ENCODE measurements at regions of chr1 and their contacts with region 1.

Region 1: GRCh38 chr1:162035241-162035640 is 11.6 kb upstream of the OLFML2B start:
- DNase-seq: peak; percentile 60
- H3K4me3 ChIP-seq: no peak overlapping the region
- H3K27ac ChIP-seq: no peak overlapping the region
- H3K4me1 ChIP-seq: peaks cover 6% of the 10 kb centered on the region
- H3K27me3 ChIP-seq: peaks cover 0 to 13% of the 10 kb centered on the region in 2 experiments
- CTCF ChIP-seq: no peak
- POLR2A ChIP-seq: no peak

Region 2: DNA sequence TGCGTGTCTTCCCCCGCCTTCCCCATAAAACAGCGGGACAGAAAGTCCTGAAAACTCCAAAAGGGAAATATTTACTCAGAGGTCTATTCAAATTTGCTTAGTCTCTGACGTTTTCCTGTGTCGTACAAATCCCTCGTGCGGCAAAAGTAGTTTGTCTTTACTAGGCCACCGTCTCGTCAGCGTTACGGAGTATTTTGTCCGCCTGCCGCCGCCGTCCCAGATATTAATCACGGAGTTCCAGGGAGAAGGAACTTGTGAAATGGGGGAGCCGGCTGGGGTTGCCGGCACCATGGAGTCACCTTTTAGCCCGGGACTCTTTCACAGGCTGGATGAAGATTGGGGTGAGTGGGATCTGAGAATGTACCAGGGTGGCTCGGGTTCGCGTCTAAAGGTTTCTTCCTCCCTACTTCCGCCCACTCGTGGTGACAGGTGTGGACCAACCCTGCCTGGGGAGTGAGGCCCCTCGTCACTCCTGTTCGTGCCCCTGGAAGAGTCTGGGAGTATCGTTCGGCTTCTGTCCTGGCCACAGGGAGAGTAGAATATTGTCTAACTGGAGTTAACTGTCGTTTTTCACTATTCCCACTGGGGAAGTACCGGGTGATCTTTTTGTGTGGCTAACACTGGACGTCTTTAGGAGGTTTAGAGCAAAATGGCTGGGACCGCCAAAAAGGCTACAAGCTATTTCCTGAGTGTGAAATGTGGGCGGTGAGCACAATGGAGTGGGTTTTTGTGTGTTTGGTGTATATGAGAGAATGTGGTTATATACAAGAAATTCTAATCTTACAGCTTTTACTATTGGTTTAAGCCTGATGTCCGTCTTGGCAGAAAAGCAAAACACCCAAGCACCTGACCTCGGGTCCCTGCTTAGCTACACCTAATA is 268.9 kb before region 1 on chr1 and contains the start of gene ATF6:
- CTCF ChIA-PET with region 1: interaction called, 68 read pairs
- POLR2A ChIA-PET with region 1: interaction called, 3 read pairs
- dilution Hi-C with region 1: no loop called
- intact Hi-C with region 1: loop called (anchors 10 kb)
- DNase-seq: peak; percentile 97
- H3K4me3 ChIP-seq: peak within 1 kb of the TSS; percentile 64 to 92 (median 84)
- H3K27ac ChIP-seq: peak within 1 kb of the TSS; percentile 88
- H3K4me1 ChIP-seq: peaks cover 30% of the 10 kb centered on the region
- H3K27me3 ChIP-seq: no peaks in the 10 kb centered on the region
- CTCF ChIP-seq: no peak
- POLR2A ChIP-seq: peak; percentile 70
- total RNA-seq, gene ATF6: 38.8 and 40.3 TPM in 2 replicates

Region 3: DNA sequence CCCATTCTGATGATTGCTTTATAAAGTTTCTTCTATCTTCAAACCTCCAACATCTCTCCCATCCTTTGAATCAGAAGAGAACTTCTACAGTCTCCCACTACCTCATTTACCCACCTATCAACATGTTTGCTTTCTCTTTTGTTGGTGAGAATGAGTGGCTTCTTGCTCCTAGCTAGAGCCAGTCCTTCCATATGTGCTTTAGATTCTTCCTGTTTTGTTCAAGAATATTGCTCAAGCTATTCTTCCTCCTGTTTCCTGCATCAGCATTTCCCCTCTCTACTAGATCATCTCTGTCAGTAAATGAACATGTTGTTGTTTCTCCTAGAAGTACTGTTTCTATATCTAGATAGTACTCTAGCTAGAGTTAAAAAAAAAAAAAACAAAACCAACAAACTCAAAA is 262.8 kb before region 1 on chr1:
- CTCF ChIA-PET with region 1: interaction called, 14 read pairs
- POLR2A ChIA-PET with region 1: interaction called, 3 read pairs
- dilution Hi-C with region 1: no loop called
- intact Hi-C with region 1: loop called (anchors 10 kb)
- DNase-seq: peak; percentile 73
- H3K4me3 ChIP-seq: no peak overlapping the region
- H3K27ac ChIP-seq: no peak overlapping the region
- H3K4me1 ChIP-seq: peaks cover 43% of the 10 kb centered on the region
- H3K27me3 ChIP-seq: no peaks in the 10 kb centered on the region
- CTCF ChIP-seq: no peak
- POLR2A ChIP-seq: no peak

Region 4: DNA sequence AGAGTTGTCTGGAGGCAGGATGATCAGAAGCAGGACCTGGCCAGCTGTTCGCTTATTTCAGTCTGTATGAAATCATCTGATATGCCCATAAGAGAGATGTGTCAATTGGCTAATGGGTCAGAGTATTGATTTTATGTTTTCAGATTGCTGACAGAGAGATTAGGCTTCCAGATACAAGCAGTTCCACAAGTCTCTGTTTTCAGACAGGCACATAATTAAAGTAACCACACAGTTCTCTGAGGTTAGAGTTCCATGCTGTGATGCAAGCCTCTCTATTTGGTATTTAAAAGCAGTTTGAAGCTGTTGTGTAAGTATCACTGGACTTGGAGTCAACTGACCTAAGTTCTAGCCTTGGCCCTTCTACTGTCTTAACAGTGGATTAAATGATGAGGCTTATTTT is 219.0 kb before region 1 on chr1:
- CTCF ChIA-PET with region 1: interaction called, 11 read pairs
- POLR2A ChIA-PET with region 1: no interaction called
- dilution Hi-C with region 1: no loop called
- intact Hi-C with region 1: no loop called
- DNase-seq: no peak
- H3K4me3 ChIP-seq: no peak overlapping the region
- H3K27ac ChIP-seq: no peak overlapping the region
- H3K4me1 ChIP-seq: no peaks in the 10 kb centered on the region
- H3K27me3 ChIP-seq: no peaks in the 10 kb centered on the region
- CTCF ChIP-seq: no peak
- POLR2A ChIP-seq: no peak

Region 5: DNA sequence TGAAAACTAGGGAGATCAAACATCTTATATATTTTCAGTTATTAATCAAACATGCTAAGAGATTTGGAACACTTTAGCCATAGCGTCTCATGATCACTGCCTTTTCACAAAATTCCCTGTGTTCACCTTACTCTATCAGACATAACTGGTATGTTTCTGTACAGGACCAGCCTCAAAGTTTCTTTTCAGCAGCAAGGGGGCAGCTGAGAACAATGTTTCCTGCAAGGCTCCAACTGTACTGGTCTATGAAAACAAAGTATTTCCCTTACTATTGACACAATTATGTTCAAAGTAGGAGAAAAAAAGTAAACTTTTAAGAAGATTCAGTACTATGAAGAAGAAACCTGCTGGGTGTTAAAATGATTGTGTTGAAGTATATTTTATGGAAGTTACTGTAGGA is 170.7 kb before region 1 on chr1:
- CTCF ChIA-PET with region 1: interaction called, 82 read pairs
- POLR2A ChIA-PET with region 1: no interaction called
- dilution Hi-C with region 1: no loop called
- intact Hi-C with region 1: loop called (anchors 1 kb)
- DNase-seq: peak; percentile 69
- H3K4me3 ChIP-seq: no peak overlapping the region
- H3K27ac ChIP-seq: no peak overlapping the region
- H3K4me1 ChIP-seq: peaks cover 6% of the 10 kb centered on the region
- H3K27me3 ChIP-seq: no peaks in the 10 kb centered on the region
- CTCF ChIP-seq: peak; percentile 7 to 27
- POLR2A ChIP-seq: no peak

Region 6: GRCh38 chr1:162023547-162024501 is 11.4 kb before region 1 on chr1 and contains the start of gene OLFML2B:
- CTCF ChIA-PET with region 1: interaction called, 27 read pairs
- POLR2A ChIA-PET with region 1: no interaction called
- dilution Hi-C with region 1: no loop called
- intact Hi-C with region 1: no loop called
- DNase-seq: peak; percentile 70
- H3K4me3 ChIP-seq: peak within 1 kb of the TSS; percentile 9 to 55 (median 45)
- H3K27ac ChIP-seq: no peak within 1 kb of the TSS
- H3K4me1 ChIP-seq: peaks cover 8% of the 10 kb centered on the region
- H3K27me3 ChIP-seq: peaks cover 0 to 3% of the 10 kb centered on the region in 2 experiments
- CTCF ChIP-seq: peak; percentile 19 to 31
- POLR2A ChIP-seq: no peak
- total RNA-seq, gene OLFML2B: 0.51 and 0.62 TPM in 2 replicates

Region 7: DNA sequence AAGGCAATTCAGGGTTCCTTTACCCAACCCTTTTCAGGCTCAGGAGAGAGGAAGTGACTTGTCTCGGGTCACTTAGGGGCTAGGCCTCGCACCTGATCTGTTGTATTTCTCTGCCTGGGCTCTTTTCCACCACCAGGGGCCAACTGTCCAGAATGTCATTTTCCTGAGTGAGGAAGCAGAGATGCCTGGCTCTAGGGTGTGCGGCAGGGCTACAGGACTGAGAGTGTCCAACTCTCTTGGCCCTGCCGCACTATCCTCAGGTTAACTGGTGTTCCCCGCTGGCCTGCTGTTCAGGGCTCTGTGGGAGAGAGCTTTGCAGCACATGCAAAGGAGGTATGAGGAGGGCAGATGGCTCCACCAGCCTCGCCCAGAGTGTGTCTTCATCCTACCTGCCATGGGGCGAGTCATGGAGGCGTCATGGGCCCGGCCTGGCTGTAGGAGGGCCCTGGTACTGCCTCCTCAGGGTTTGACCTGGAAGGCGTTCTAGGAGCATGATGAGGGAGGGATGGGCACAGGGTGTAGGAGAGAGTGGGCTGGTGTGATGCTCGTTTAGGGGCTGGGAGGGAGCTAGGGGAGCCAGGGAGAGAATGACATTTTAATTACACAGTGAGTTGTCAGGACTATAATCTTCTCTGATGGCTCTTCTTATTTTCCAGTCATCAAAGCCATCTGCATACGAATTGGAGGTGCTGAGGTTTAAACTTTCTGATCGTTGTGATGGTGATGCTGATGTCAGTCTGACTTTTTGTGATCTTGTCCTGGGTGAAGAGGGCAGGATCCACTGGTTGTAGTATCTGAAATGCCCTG is 162.6 kb after region 1 on chr1:
- CTCF ChIA-PET with region 1: no interaction called
- POLR2A ChIA-PET with region 1: no interaction called
- dilution Hi-C with region 1: no loop called
- intact Hi-C with region 1: no loop called
- DNase-seq: no peak
- H3K4me3 ChIP-seq: no peak overlapping the region
- H3K27ac ChIP-seq: no peak overlapping the region
- H3K4me1 ChIP-seq: peaks cover 23% of the 10 kb centered on the region
- H3K27me3 ChIP-seq: no peaks in the 10 kb centered on the region
- CTCF ChIP-seq: peak in 1 of 2 donors; percentile 23
- POLR2A ChIP-seq: no peak